Naive thymus-derived CD4-positive, alpha-beta T cell (primary cell): ENCODE measurements at regions of chr7 and their contacts with region 1.

Region 1: GRCh38 chr7:66564045-66564444 is 64.6 kb upstream of the KCTD7 start:
- DNase-seq: no peak
- ATAC-seq: no peak
- H3K4me3 ChIP-seq: no peak overlapping the region
- H3K4me3 Mint-ChIP-seq: no peak overlapping the region
- H3K27ac ChIP-seq: peak overlapping the region; percentile 4
- H3K27ac Mint-ChIP-seq: peak overlapping the region in 7 of 9 donors; percentile 32 to 86 (median 59)
- H3K4me1 ChIP-seq: no peaks in the 10 kb centered on the region
- H3K4me1 Mint-ChIP-seq: peaks cover 0 to 23% (median 8%) of the 10 kb centered on the region in 7 donors
- H3K27me3 ChIP-seq: no peaks in the 10 kb centered on the region
- H3K27me3 Mint-ChIP-seq: no peaks in the 10 kb centered on the region

Region 2: GRCh38 chr7:66651016-66651415 is 87.0 kb after region 1 on chr7:
- CTCF ChIA-PET with region 1: no interaction called
- POLR2A ChIA-PET with region 1: no interaction called
- intact Hi-C with region 1: no loop called
- DNase-seq: no peak
- ATAC-seq: no peak
- H3K4me3 ChIP-seq: no peak overlapping the region
- H3K4me3 Mint-ChIP-seq: peak overlapping the region in 2 of 10 donors; percentile 16 to 45
- H3K27ac ChIP-seq: no peak overlapping the region
- H3K27ac Mint-ChIP-seq: peak overlapping the region in 3 of 9 donors; percentile 16 to 67 (median 28)
- H3K4me1 ChIP-seq: peaks cover 8% of the 10 kb centered on the region in 2 donors
- H3K4me1 Mint-ChIP-seq: peaks cover 16 to 48% (median 31%) of the 10 kb centered on the region in 7 donors
- H3K27me3 ChIP-seq: no peaks in the 10 kb centered on the region
- H3K27me3 Mint-ChIP-seq: no peaks in the 10 kb centered on the region

Region 3: GRCh38 chr7:66681491-66682349 is 117.7 kb after region 1 on chr7:
- CTCF ChIA-PET with region 1: no interaction called
- POLR2A ChIA-PET with region 1: no interaction called
- intact Hi-C with region 1: loop called in 1 of 2 experiments (anchors 10 kb)
- DNase-seq: peak; percentile 92 to 97 (median 95)
- ATAC-seq: peak; percentile 98
- H3K4me3 ChIP-seq: peak overlapping the region; percentile 96
- H3K4me3 Mint-ChIP-seq: peak overlapping the region; percentile 82 to 96 (median 92)
- H3K27ac ChIP-seq: peak overlapping the region; percentile 95
- H3K27ac Mint-ChIP-seq: peak overlapping the region; percentile 86 to 98 (median 97)
- H3K4me1 ChIP-seq: peaks cover 5 to 11% of the 10 kb centered on the region in 2 donors
- H3K4me1 Mint-ChIP-seq: peaks cover 7 to 59% (median 31%) of the 10 kb centered on the region in 7 donors
- H3K27me3 ChIP-seq: no peaks in the 10 kb centered on the region
- H3K27me3 Mint-ChIP-seq: no peaks in the 10 kb centered on the region

Region 4: GRCh38 chr7:66790196-66790595 is 226.2 kb after region 1 on chr7:
- CTCF ChIA-PET with region 1: no interaction called
- POLR2A ChIA-PET with region 1: no interaction called
- intact Hi-C with region 1: loop called (anchors 2 to 10 kb)
- DNase-seq: no peak
- ATAC-seq: peak; percentile 22
- H3K4me3 ChIP-seq: no peak overlapping the region
- H3K4me3 Mint-ChIP-seq: peak overlapping the region in 1 of 10 donors; percentile 25
- H3K27ac ChIP-seq: no peak overlapping the region
- H3K27ac Mint-ChIP-seq: no peak overlapping the region
- H3K4me1 ChIP-seq: no peaks in the 10 kb centered on the region
- H3K4me1 Mint-ChIP-seq: peaks cover 0 to 9% (median 0%) of the 10 kb centered on the region in 7 donors
- H3K27me3 ChIP-seq: no peaks in the 10 kb centered on the region
- H3K27me3 Mint-ChIP-seq: no peaks in the 10 kb centered on the region